Activated B cell treated with CpG ODN at 0.5 μM for 24 hours (primary cell): ENCODE measurements at regions of chr2 and their contacts with region 1.

Region 1: GRCh38 chr2:27016801-27017325 is 15.9 kb upstream of the TMEM214 start:
- DNase-seq: no peak
- ATAC-seq: peak; percentile 74
- H3K4me3 Mint-ChIP-seq: no peak overlapping the region
- H3K27ac Mint-ChIP-seq: no peak overlapping the region
- H3K4me1 Mint-ChIP-seq: no peaks in the 10 kb centered on the region
- H3K27me3 Mint-ChIP-seq: peaks cover 6% of the 10 kb centered on the region
- CTCF ChIP-seq: no peak

Region 2: GRCh38 chr2:26846328-26847306 is 170.2 kb before region 1 on chr2:
- CTCF ChIA-PET with region 1: interaction called, 23 read pairs
- POLR2A ChIA-PET with region 1: no interaction called
- intact Hi-C with region 1: loop called (anchors 1 kb)
- DNase-seq: peak; percentile 54
- ATAC-seq: peak; percentile 71
- H3K4me3 Mint-ChIP-seq: peak overlapping the region; percentile 77
- H3K27ac Mint-ChIP-seq: no peak overlapping the region
- H3K4me1 Mint-ChIP-seq: peaks cover 20% of the 10 kb centered on the region
- H3K27me3 Mint-ChIP-seq: peaks cover 47% of the 10 kb centered on the region
- CTCF ChIP-seq: no peak

Region 3: GRCh38 chr2:26959331-26959730 is 57.5 kb before region 1 on chr2:
- CTCF ChIA-PET with region 1: interaction called, 52 read pairs
- POLR2A ChIA-PET with region 1: interaction called, 10 read pairs
- intact Hi-C with region 1: loop called (anchors 1 kb)
- DNase-seq: no peak
- ATAC-seq: no peak
- H3K4me3 Mint-ChIP-seq: no peak overlapping the region
- H3K27ac Mint-ChIP-seq: no peak overlapping the region
- H3K4me1 Mint-ChIP-seq: no peaks in the 10 kb centered on the region
- H3K27me3 Mint-ChIP-seq: peaks cover 21% of the 10 kb centered on the region
- CTCF ChIP-seq: no peak

Region 4: GRCh38 chr2:26964446-26965130 is 52.3 kb before region 1 on chr2:
- CTCF ChIA-PET with region 1: interaction called, 52 read pairs
- POLR2A ChIA-PET with region 1: interaction called, 10 read pairs
- intact Hi-C with region 1: loop called (anchors 1 kb)
- DNase-seq: no peak
- ATAC-seq: no peak
- H3K4me3 Mint-ChIP-seq: no peak overlapping the region
- H3K27ac Mint-ChIP-seq: no peak overlapping the region
- H3K4me1 Mint-ChIP-seq: peaks cover 5% of the 10 kb centered on the region
- H3K27me3 Mint-ChIP-seq: peaks cover 36% of the 10 kb centered on the region
- CTCF ChIP-seq: no peak